ENCODE measurements at regions of chr1 and their contacts with region 1.

Region 1: GRCh38 chr1:92817986-92818764 is 13.7 kb upstream of the RPL5 start:
- DNase-seq: no peak
- H3K4me3 ChIP-seq: no peak overlapping the region
- H3K27ac ChIP-seq: no peak overlapping the region
- H3K4me1 ChIP-seq: peaks cover 6% of the 10 kb centered on the region
- H3K27me3 ChIP-seq: no peaks in the 10 kb centered on the region
- CTCF ChIP-seq: peak; percentile 80 to 89

Region 2: GRCh38 chr1:92310185-92310597 is 508.0 kb before region 1 on chr1:
- CTCF ChIA-PET with region 1: interaction called, 5 read pairs
- dilution Hi-C with region 1: no loop called
- in situ Hi-C with region 1: no loop called
- intact Hi-C with region 1: loop called (anchors 10 kb)
- DNase-seq: peak; percentile 16
- H3K4me3 ChIP-seq: no peak overlapping the region
- H3K27ac ChIP-seq: no peak overlapping the region
- H3K4me1 ChIP-seq: no peaks in the 10 kb centered on the region
- H3K27me3 ChIP-seq: no peaks in the 10 kb centered on the region
- CTCF ChIP-seq: peak; percentile 50 to 56

Region 3: DNA sequence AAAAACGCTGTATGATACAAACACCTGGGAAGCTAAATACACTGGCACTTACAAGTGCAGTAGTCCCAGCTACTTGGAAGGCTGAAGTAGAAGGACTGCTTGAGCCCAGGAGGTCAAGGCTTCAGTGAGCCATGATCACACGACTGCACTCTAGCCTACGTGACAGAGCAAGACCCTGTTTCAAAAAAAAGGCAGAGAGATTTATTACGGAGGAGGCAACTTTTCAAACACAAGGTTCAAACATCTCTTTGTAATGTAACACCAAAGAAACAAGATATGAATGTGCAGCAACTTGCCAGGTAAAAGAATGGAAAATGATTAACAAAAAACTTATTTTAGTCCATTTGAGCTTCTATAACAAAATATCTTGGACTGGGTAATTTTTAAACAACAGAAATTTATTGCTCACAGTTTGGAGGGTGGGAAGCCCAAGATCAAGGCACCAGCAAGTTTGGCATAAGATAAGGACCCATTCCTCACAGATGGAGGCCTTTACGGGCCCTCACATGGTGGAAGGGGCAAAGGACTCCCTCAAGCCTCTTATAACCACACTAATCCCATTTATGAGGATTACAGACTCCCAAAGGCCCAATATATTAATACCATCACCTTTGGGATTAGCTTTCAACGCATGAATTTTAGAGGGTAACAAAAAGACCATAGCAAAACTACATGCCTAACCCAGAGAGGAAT is 106.6 kb before region 1 on chr1:
- CTCF ChIA-PET with region 1: no interaction called
- dilution Hi-C with region 1: loop called (anchors 5 kb)
- in situ Hi-C with region 1: no loop called
- intact Hi-C with region 1: no loop called
- DNase-seq: no peak
- H3K4me3 ChIP-seq: no peak overlapping the region
- H3K27ac ChIP-seq: no peak overlapping the region
- H3K4me1 ChIP-seq: no peaks in the 10 kb centered on the region
- H3K27me3 ChIP-seq: no peaks in the 10 kb centered on the region
- CTCF ChIP-seq: no peak

Region 4: DNA sequence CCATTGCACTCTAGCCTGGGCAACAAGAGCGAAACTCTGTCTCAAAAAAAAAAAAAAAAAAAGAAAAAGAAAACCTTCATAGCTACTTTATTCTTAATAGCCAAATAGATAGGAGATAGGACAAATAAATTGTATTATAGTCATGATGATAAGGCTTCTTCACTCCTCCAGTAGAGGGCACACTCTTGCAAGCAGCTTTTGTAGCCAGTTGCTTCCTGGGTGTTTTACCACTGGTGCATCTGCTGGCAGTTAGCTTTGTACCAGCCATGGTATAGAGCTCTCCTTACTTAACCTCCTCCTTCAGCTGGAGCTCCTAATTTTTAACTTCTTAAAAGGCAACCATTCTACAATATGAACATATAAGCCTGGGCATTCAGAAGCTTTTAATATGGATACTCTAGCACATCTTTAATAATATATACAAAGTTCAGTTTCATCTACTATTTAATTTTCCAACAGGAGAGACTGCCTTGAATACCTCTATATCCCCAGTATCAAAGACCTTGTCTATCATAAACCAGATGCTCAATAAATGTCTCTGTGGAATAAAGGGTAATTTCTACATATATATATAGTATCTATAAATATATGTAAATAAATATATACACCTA is 69.0 kb before region 1 on chr1:
- CTCF ChIA-PET with region 1: interaction called, 40 read pairs
- dilution Hi-C with region 1: loop called (anchors 5 kb)
- in situ Hi-C with region 1: loop called in 1 of 2 experiments (anchors 10 kb)
- intact Hi-C with region 1: loop called (anchors 1 kb)
- DNase-seq: peak; percentile 54
- H3K4me3 ChIP-seq: no peak overlapping the region
- H3K27ac ChIP-seq: no peak overlapping the region
- H3K4me1 ChIP-seq: peaks cover 18% of the 10 kb centered on the region
- H3K27me3 ChIP-seq: no peaks in the 10 kb centered on the region
- CTCF ChIP-seq: peak; percentile 80 to 91

Region 5: DNA sequence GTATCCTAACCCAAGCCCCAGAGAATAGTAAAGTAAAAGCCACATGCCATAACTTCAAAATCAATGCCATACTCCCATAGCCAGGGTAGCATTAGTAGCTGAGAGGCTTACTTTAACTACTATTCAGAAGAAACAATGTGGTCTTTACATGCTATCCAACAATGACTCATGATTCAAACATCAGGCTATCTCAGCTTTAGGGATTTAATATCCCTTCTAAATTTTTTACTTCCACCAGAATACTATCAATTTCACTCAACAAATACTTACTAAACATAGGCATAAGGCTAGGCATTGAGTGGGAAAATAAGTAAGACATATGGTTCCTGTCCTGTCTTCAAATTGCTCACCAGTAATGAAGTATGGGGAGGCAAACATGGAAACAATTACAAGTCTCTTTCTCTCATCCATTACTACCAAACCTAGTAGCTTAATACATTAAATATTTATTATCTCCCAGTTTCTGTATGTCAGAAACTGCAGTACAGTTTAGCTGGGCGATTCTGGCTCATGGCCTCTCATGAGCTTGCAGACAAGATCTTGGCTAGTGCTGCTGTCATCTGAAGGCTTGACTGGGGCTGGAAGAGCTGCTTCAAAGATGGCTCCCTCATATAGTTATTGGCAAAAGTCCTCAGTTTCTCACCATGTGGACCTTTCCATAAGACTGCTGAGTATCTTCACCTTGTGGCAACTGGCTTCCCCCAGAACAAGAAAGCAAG is 64.0 kb before region 1 on chr1:
- CTCF ChIA-PET with region 1: interaction called, 40 read pairs
- dilution Hi-C with region 1: loop called (anchors 5 kb)
- in situ Hi-C with region 1: loop called in 1 of 2 experiments (anchors 10 kb)
- intact Hi-C with region 1: loop called (anchors 1 kb)
- DNase-seq: peak; percentile 35
- H3K4me3 ChIP-seq: no peak overlapping the region
- H3K27ac ChIP-seq: no peak overlapping the region
- H3K4me1 ChIP-seq: peaks cover 19% of the 10 kb centered on the region
- H3K27me3 ChIP-seq: no peaks in the 10 kb centered on the region
- CTCF ChIP-seq: no peak

Region 6: DNA sequence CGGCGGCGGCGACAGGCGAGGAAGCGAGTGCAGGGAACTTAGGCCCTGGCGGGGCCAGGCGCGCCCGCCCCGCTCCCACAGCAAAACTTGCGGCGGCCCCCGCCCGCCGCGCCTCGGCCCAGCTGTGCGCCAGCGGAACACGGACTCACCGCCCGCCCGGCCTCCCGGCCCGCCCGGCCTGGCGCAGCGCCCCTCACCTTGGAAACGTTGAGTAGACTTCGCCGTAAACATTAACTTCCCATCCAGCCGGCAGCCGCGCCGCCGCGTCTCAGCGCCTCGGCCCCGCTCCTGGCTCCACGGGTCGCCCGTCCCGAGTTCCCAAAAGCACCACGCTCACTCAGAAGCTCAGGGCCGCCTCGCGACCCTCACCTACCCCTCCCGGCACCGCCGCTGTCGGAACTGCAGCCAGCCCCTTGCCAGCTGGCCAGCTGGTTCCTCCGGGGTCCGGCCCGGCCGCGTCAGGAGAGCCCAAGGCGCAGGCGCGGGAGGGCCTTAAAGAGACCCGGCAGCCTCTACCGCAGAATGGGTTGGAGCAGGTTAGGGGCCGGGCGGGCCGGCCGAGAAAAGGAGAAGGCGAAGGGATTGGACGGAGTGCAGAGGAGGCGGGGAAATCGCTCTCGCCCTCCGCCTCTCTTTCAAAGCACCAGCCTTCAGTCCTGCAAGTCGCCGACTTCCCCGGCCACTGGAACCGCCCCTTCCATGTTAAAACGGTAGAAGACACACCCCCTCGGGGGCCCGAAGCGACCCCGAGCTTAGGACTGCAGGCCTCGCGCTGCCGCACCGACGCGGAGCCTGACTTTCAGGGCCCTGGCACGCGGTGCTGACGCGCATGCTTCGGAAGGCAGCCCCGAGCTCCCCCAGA is 33.3 kb before region 1 on chr1 and contains the start of gene EVI5:
- CTCF ChIA-PET with region 1: interaction called, 5 read pairs
- dilution Hi-C with region 1: no loop called
- in situ Hi-C with region 1: no loop called
- intact Hi-C with region 1: loop called (anchors 2 kb)
- DNase-seq: peak; percentile 95
- H3K4me3 ChIP-seq: peak within 1 kb of the TSS; percentile 76 to 98 (median 83)
- H3K27ac ChIP-seq: peak within 1 kb of the TSS; percentile 66
- H3K4me1 ChIP-seq: peaks cover 13% of the 10 kb centered on the region
- H3K27me3 ChIP-seq: no peaks in the 10 kb centered on the region
- CTCF ChIP-seq: no peak
- total RNA-seq, gene EVI5: 30.3 to 43.3 TPM

Region 7: GRCh38 chr1:92960395-92961130 is 142.4 kb after region 1 on chr1:
- CTCF ChIA-PET with region 1: no interaction called
- dilution Hi-C with region 1: no loop called
- in situ Hi-C with region 1: no loop called
- intact Hi-C with region 1: no loop called
- DNase-seq: peak; percentile 81
- H3K4me3 ChIP-seq: peak overlapping the region; percentile 62 to 70 (median 67)
- H3K27ac ChIP-seq: peak overlapping the region; percentile 80
- H3K4me1 ChIP-seq: peaks cover 15% of the 10 kb centered on the region
- H3K27me3 ChIP-seq: no peaks in the 10 kb centered on the region
- CTCF ChIP-seq: peak; percentile 60 to 85

Region 8: GRCh38 chr1:93123201-93123783 is 305.1 kb after region 1 on chr1:
- CTCF ChIA-PET with region 1: no interaction called
- dilution Hi-C with region 1: no loop called
- in situ Hi-C with region 1: no loop called
- intact Hi-C with region 1: no loop called
- DNase-seq: no peak
- H3K4me3 ChIP-seq: no peak overlapping the region
- H3K27ac ChIP-seq: no peak overlapping the region
- H3K4me1 ChIP-seq: no peaks in the 10 kb centered on the region
- H3K27me3 ChIP-seq: no peaks in the 10 kb centered on the region
- CTCF ChIP-seq: no peak